ENCODE measurements at regions of chr2 and their contacts with region 1.

Region 1: GRCh38 chr2:216139884-216140283 is 30.7 kb downstream of the XRCC5 start:
- DNase-seq: peak; percentile 45
- ATAC-seq: peak; percentile 28
- H3K4me3 ChIP-seq: no peak overlapping the region
- H3K4me3 Mint-ChIP-seq: no peak overlapping the region
- H3K27ac ChIP-seq: no peak overlapping the region
- H3K27ac Mint-ChIP-seq: no peak overlapping the region
- H3K4me1 ChIP-seq: no peaks in the 10 kb centered on the region
- H3K4me1 Mint-ChIP-seq: no peaks in the 10 kb centered on the region
- H3K27me3 ChIP-seq: no peaks in the 10 kb centered on the region
- H3K27me3 Mint-ChIP-seq: no peaks in the 10 kb centered on the region
- CTCF ChIP-seq: peak; percentile 60

Region 2: GRCh38 chr2:216044883-216045486 is 94.9 kb before region 1 on chr2:
- CTCF ChIA-PET with region 1: no interaction called
- POLR2A ChIA-PET with region 1: no interaction called
- intact Hi-C with region 1: no loop called
- DNase-seq: no peak
- ATAC-seq: no peak
- H3K4me3 ChIP-seq: no peak overlapping the region
- H3K4me3 Mint-ChIP-seq: no peak overlapping the region
- H3K27ac ChIP-seq: no peak overlapping the region
- H3K27ac Mint-ChIP-seq: no peak overlapping the region
- H3K4me1 ChIP-seq: no peaks in the 10 kb centered on the region
- H3K4me1 Mint-ChIP-seq: no peaks in the 10 kb centered on the region
- H3K27me3 ChIP-seq: no peaks in the 10 kb centered on the region
- H3K27me3 Mint-ChIP-seq: no peaks in the 10 kb centered on the region
- CTCF ChIP-seq: no peak

Region 3: DNA sequence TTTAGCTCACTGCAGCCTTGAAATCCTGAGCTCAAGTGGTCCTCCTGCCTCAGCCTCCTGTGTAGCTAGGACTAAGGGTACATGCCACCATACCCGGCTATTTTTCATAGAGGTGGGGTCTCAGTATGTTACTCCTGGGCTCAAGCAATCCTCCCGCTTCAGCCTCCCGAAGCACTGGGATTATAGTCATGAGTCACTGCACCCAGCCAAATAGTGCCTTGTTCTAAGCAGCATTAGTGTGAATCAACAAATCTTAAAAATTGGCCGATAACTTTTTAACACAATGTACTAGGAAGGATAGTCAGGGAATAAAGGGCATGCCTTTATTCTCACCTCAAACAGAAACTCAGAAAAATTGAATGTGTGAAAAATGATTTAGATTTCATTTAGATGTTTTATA is 20.9 kb after region 1 on chr2:
- CTCF ChIA-PET with region 1: interaction called, 10 read pairs
- POLR2A ChIA-PET with region 1: no interaction called
- intact Hi-C with region 1: no loop called
- DNase-seq: no peak
- ATAC-seq: no peak
- H3K4me3 ChIP-seq: no peak overlapping the region
- H3K4me3 Mint-ChIP-seq: no peak overlapping the region
- H3K27ac ChIP-seq: no peak overlapping the region
- H3K27ac Mint-ChIP-seq: no peak overlapping the region
- H3K4me1 ChIP-seq: no peaks in the 10 kb centered on the region
- H3K4me1 Mint-ChIP-seq: no peaks in the 10 kb centered on the region
- H3K27me3 ChIP-seq: no peaks in the 10 kb centered on the region
- H3K27me3 Mint-ChIP-seq: no peaks in the 10 kb centered on the region
- CTCF ChIP-seq: no peak

Region 4: GRCh38 chr2:216235462-216235861 is 95.6 kb after region 1 on chr2:
- CTCF ChIA-PET with region 1: no interaction called
- POLR2A ChIA-PET with region 1: no interaction called
- intact Hi-C with region 1: no loop called
- DNase-seq: no peak
- ATAC-seq: no peak
- H3K4me3 ChIP-seq: no peak overlapping the region
- H3K4me3 Mint-ChIP-seq: no peak overlapping the region
- H3K27ac ChIP-seq: no peak overlapping the region
- H3K27ac Mint-ChIP-seq: no peak overlapping the region
- H3K4me1 ChIP-seq: no peaks in the 10 kb centered on the region
- H3K4me1 Mint-ChIP-seq: no peaks in the 10 kb centered on the region
- H3K27me3 ChIP-seq: no peaks in the 10 kb centered on the region
- H3K27me3 Mint-ChIP-seq: no peaks in the 10 kb centered on the region
- CTCF ChIP-seq: no peak